Aorta (tissue), 5 donors: ENCODE measurements at regions of chr13 and their contacts with region 1.

Region 1: DNA sequence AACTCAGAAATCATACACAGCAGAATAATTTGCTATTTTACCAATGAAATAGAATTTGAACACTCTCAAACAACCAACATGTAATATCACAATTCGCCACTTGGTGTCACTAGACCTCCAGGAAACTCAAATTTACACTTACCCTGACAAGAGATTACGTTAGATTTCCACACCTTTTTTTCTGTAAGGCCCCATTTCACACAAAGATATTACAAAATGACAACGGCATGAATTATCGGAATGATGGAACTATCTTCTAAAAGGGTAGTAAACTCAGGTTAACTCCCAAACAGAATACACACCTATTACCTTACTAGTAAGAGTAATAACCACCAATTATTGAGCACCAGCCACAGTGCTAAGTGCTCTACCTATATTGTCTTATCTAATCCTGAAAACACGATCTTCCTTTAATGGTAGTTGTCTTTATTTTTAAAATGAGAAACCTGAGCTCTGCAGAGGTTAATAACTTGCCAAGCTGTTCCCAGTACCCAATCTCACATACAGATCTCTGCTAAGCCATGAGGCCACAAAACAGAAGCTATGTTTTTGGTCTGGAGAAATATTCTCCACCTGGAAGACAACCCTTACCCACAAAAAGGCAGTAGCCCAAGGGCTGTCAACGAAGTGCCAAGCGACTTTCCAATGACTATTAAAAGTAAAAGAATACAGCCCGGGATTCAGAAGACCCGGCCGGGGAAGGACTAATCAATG is 152.4 kb downstream of the DCLK1 start:
- DNase-seq: no peak
- ATAC-seq: peak; percentile 82
- H3K4me3 ChIP-seq: no peak overlapping the region
- H3K27ac ChIP-seq: peak overlapping the region; percentile 92 to 93
- H3K4me1 ChIP-seq: peaks cover 0 to 2% of the 10 kb centered on the region in 2 donors
- H3K27me3 ChIP-seq: no peaks in the 10 kb centered on the region

Region 2: DNA sequence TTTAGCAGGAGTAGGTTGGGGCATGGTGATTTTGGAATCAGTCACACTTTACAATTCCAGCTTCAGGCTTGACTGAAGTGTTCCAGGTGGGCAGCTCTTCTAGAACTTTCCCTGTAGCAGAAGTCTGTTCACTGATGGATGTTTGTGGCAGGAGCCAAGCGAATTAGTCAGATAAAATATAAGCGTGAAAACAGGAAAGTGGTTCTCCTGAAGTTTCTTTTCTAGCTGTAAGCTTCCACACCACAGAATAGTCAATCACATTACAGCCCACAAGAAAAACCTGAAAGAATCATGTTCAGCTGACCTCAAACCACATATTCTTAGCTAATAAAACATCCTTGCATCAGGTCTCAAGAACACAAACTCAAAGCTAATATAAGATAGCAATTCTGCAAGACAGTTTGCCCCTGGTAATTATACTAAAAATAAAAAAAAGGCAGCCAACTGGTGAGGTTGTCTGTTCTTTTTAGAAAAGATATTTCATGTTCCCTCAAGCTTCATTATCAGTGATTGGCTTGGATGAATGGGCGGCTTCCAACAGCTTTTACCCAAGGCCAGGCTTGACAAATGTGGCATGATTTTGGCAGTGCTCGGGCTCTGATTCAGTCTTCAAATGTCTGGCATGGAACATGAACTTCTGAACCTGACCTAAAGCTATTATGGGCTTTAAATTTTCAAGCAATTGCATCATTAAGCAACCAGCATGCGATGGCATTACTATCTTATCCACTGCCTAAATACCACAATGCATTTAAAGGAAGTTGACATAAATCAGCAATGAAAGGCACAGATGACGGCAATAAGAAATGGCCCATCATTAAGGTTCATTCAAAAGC is 15.6 kb after region 1 on chr13:
- intact Hi-C with region 1: loop called in 1 of 2 experiments (anchors 2 kb)
- DNase-seq: peak; percentile 84 to 85
- ATAC-seq: peak; percentile 78
- H3K4me3 ChIP-seq: no peak overlapping the region
- H3K27ac ChIP-seq: peak overlapping the region; percentile 16 to 95
- H3K4me1 ChIP-seq: peaks cover 4% of the 10 kb centered on the region in 2 donors
- H3K27me3 ChIP-seq: no peaks in the 10 kb centered on the region

Region 3: DNA sequence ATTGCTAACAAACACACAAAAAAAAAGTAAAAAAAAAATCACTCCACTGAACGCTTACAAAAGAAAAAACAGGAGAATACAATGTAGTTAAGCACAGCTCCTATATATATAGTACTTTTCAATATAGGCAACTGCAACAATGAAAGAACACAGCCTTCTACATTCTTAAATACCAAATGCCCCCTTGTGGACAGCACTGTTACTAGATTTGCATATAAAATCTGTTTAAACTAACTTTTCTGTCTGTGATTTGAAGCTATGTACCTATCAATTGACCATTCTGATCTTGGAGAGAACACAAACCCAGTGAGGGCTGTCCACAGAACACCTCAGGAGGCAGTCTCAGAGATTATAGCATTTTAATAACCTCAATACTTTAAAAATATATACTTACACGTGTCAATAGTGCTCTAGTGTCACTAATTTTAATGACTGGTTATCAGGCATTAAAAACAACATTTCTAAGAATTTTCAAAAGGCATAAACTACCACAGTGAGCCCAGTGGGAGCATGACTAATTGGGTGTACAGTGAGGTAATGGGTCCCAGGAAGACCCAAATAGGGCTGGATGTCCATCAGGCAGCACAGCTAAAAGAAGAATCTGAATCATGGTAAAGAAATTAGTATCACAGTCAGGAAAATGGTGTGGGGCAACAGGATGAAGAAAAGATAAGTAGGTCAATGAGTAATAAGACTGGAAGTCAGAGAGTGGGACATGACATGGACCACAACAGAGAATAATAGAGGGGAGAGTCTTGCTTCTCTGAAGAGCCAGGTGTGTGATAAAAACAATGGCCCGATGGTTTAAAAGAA is 296.6 kb after region 1 on chr13:
- intact Hi-C with region 1: loop called (anchors 1 to 2 kb)
- DNase-seq: no peak
- ATAC-seq: peak; percentile 68
- H3K4me3 ChIP-seq: no peak overlapping the region
- H3K27ac ChIP-seq: no peak overlapping the region
- H3K4me1 ChIP-seq: no peaks in the 10 kb centered on the region
- H3K27me3 ChIP-seq: no peaks in the 10 kb centered on the region

Region 4: DNA sequence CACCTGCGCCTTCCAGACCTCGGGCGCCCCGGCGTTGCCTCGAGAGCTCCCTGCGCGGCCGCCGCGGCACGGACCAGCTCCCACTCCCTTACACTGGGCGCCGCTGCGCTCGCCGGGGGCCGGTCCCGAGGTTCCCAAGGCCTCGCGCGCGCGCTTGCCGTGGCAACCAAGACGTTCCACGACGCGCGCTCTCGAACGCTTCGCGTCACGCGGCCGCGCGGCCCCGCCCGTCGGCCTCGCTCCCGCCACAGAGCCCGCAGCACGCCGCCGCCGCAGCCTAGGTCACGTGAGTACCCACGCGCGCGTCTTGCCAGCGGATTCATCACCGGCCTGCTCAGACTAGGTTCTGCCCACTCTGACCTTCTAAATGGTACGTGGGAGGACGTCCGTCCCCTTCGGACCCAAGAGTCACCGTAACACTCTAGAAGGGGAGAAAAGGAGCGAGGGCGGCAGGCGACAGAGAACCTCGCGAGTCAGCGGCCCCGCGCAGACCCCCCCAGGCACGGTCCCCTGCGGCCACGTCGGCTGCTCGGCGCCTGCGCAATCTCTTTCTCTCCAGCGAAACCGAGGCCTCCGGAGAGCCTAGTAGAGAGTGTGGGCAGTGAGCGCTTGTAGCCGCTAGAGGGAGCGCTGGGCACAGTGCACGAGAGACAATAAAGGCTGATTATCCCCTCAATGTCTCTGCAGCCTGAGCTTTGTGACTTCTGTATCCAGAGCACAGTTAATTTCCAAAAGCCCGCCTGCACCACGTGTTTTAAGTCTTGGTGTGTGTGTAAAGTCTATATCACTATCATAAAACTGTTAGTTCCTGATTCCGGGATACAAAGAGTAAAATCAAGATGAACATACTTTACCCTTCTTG is 367.7 kb after region 1 on chr13 and contains the start of gene SPART:
- intact Hi-C with region 1: loop called in 1 of 2 experiments (anchors 5 kb)
- DNase-seq: peak; percentile 94 to 96
- ATAC-seq: peak; percentile 95
- H3K4me3 ChIP-seq: peak within 1 kb of the TSS; percentile 53 to 66
- H3K27ac ChIP-seq: peak within 1 kb of the TSS; percentile 78 to 91
- H3K4me1 ChIP-seq: no peaks in the 10 kb centered on the region
- H3K27me3 ChIP-seq: no peaks in the 10 kb centered on the region
- total RNA-seq, gene SPART: 73.5 to 74.7 TPM

Region 5: DNA sequence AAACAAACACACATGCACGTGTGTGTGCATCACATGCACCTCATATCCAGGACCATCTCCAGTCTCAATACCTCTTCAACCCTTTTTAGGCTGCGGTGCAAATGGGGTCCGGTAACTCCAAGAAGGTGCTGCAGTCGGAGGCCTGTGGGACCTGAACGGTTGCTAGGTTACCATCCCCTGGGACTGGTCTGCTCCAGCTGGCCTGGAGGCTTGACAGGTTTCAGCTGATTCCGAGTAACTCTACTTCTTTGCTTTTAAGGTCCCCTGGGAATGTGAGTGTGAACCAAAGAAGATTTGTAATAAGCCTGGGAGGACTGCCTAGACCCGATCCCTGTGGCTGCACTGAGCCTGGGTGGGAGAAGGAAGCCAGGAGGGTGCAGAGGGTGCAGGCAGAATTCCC is 571.0 kb after region 1 on chr13:
- intact Hi-C with region 1: no loop called
- DNase-seq: no peak
- ATAC-seq: no peak
- H3K4me3 ChIP-seq: no peak overlapping the region
- H3K27ac ChIP-seq: no peak overlapping the region
- H3K4me1 ChIP-seq: peaks cover 0 to 2% of the 10 kb centered on the region in 2 donors
- H3K27me3 ChIP-seq: no peaks in the 10 kb centered on the region

Region 6: DNA sequence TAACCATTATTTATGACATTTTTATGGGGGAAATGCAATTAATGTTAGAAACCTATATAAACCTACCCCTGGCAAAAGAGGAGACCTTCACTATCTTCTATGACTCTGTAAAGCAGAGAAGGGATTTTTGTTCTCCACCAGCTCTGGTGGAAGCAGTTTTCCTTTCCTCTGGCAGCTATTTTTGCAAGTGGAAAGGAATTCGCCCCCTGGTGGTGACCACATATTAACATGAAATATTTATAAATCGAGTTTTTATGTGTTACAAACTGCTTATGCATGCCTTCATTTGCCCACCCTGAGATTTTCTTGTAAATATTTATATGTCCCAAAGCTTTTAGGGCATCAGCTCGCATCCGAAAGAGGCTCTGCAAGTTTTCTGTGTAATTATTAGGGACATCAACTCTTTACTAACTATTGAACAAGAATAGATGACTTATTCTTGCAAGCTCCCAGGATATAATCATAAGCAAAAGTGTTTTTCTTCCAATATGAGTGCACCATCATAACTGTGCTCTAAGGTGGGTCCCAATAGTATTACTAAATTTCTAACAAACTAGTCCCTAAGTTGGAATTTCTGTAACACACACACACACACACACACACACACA is 757.5 kb after region 1 on chr13:
- intact Hi-C with region 1: loop called (anchors 5 to 10 kb)
- DNase-seq: peak in 1 of 2 donors; percentile 51
- ATAC-seq: no peak
- H3K4me3 ChIP-seq: no peak overlapping the region
- H3K27ac ChIP-seq: no peak overlapping the region
- H3K4me1 ChIP-seq: no peaks in the 10 kb centered on the region
- H3K27me3 ChIP-seq: no peaks in the 10 kb centered on the region

Region 7: GRCh38 chr13:36746051-36746450 is 767.3 kb after region 1 on chr13:
- intact Hi-C with region 1: loop called in 1 of 2 experiments (anchors 10 kb)
- DNase-seq: no peak
- ATAC-seq: no peak
- H3K4me3 ChIP-seq: no peak overlapping the region
- H3K27ac ChIP-seq: no peak overlapping the region
- H3K4me1 ChIP-seq: peaks cover 0 to 3% of the 10 kb centered on the region in 2 donors
- H3K27me3 ChIP-seq: no peaks in the 10 kb centered on the region